A549 (cell line): ENCODE measurements at regions of chr1 and their contacts with region 1.

Region 1: GRCh38 chr1:201456499-201457309 is 12.3 kb downstream of the PHLDA3 start:
- DNase-seq: peak in 1 of 2 experiments; percentile 84
- ATAC-seq: peak; percentile 45 to 61
- H3K4me3 ChIP-seq: no peak overlapping the region
- H3K27ac ChIP-seq: peak overlapping the region; percentile 78 to 88
- H3K4me1 ChIP-seq: peaks cover 51% of the 10 kb centered on the region
- CTCF ChIP-seq: no peak
- EP300 ChIP-seq: peak in 1 of 2 experiments; percentile 17; a peak in 1 of 5 replicates
- POLR2A ChIP-seq: no peak
- RAD21 ChIP-seq: no peak

Region 2: DNA sequence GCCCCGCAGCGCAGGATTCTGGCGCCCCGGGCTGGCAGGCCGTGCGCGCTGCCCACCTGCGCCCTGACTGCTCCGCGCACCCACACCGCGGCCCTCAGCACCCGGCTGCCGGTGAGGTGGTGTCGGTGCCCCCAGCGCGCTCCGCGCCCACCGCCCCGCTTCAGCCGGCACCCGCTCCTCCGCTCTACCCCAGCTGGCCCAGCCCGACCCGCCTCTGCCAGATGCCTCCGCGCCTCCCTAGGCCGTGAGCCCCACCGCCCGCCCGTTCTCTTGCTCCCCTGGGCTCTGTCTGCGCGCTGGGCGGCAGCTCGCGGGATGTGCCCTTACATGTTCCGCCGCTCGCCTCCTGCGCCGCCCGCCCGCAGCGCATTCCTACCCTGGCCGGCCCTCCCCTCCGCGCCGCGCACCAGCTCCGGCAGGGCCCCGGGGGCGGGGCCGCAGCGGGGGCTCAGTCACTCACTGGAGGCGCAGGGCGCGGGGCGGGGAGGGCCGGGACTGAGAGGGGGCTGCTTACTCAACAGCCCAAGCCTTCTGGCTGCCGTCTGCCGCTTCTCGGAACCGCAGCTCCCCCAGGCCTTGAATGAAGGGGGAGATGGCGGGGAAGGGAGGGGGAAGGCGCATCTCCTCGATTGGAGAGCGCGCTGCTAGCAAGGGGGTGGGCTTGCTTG is 12.3 kb after region 1 on chr1 and contains the start of gene PHLDA3:
- CTCF ChIA-PET with region 1: interaction called, 318 read pairs
- POLR2A ChIA-PET with region 1: interaction called, 18 read pairs
- DNase-seq: peak; percentile 77 to 78
- ATAC-seq: peak; percentile 81 to 87
- H3K4me3 ChIP-seq: peak within 1 kb of the TSS; percentile 80
- H3K27ac ChIP-seq: peak within 1 kb of the TSS; percentile 93 to 99
- H3K4me1 ChIP-seq: peaks cover 50% of the 10 kb centered on the region
- CTCF ChIP-seq: peak; percentile 8; the same call in 1 of the 3 replicates
- EP300 ChIP-seq: no peak
- POLR2A ChIP-seq: peak; percentile 85
- RAD21 ChIP-seq: peak in 1 of 2 experiments; percentile 24; a peak in 2 of 5 replicates
- polyA plus RNA-seq, gene PHLDA3: 34.3 and 40.5 TPM in 2 replicates

Region 3: GRCh38 chr1:201506556-201507359 is 50.1 kb after region 1 on chr1 and contains the start of gene CSRP1:
- CTCF ChIA-PET with region 1: interaction called, 376 read pairs
- POLR2A ChIA-PET with region 1: interaction called, 11 read pairs
- DNase-seq: peak; percentile 88 to 98
- ATAC-seq: peak; percentile 82 to 85
- H3K4me3 ChIP-seq: peak within 1 kb of the TSS; percentile 66
- H3K27ac ChIP-seq: peak within 1 kb of the TSS; percentile 87 to 96
- H3K4me1 ChIP-seq: peaks cover 62% of the 10 kb centered on the region
- CTCF ChIP-seq: no peak; the same call in 2 of the 3 replicates
- EP300 ChIP-seq: no peak
- POLR2A ChIP-seq: peak; percentile 92
- RAD21 ChIP-seq: no peak; a peak in 1 of 5 replicates
- polyA plus RNA-seq, gene CSRP1: 256 and 277 TPM in 2 replicates